Activated T-helper 2 cell treated with anti-CD3 and anti-CD28 coated beads, Interferon-gamma antibody, Interleukin-2, Interleukin-4, amounts not matched to agents 10 μg/mL and 5 μg/mL and 100 μg/mL, durations not matched to agents 14 hours and 24 hours and 36 hours (primary cell): ENCODE measurements at regions of chr5 and their contacts with region 1.

Region 1: DNA sequence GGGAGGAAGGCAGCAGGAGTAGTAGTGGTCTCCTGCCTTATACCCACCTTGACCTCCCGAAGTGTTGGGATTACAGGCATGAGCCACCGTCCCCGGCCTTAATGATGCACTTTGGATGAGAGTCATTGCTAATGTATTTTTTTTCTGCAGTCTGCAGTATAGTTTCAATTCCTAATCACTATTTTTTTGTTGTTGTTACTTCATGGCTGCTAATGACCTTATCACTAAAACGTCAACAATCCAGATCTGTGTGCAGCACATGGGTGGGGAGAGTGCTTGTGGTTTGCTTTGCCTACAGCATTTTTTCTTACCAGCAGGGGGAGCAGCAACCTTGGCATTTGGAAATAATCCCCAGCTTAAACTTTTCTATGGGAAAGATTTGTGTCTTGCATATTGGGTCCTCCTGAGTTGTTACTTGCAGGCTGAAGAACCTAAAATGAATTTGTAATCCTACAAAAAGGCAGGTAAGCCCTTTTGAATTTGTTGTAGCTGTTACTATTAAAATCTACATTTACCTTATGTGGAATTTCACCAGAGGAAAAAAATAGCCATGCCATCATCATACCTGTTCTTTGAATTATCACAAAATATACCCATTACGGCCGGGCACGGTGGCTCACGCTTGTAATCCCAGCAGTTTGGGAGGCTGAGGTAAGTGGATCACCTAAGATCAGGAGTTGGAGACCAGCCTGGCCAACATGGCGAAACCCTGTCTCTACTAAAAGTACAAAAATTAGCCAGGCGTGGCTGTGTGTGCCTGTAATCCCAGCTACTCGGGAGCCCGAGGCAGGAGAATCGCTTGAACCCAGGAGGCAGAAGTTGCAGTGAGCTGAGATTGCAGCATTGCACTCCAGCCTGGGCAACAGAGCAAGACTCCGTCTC is 6.3 kb upstream of the MED7 start:
- DNase-seq: peak; percentile 77
- H3K4me3 Mint-ChIP-seq: no peak overlapping the region
- H3K27ac Mint-ChIP-seq: peak overlapping the region; percentile 70
- H3K4me1 Mint-ChIP-seq: peaks cover 39% of the 10 kb centered on the region
- H3K27me3 Mint-ChIP-seq: no peaks in the 10 kb centered on the region

Region 2: GRCh38 chr5:157172403-157172802 is 23.4 kb after region 1 on chr5:
- intact Hi-C with region 1: loop called (anchors 1 kb)
- DNase-seq: peak; percentile 78
- H3K4me3 Mint-ChIP-seq: peak overlapping the region; percentile 73
- H3K27ac Mint-ChIP-seq: peak overlapping the region; percentile 98
- H3K4me1 Mint-ChIP-seq: peaks cover 72% of the 10 kb centered on the region
- H3K27me3 Mint-ChIP-seq: no peaks in the 10 kb centered on the region

Region 3: GRCh38 chr5:157198277-157198986 is 49.5 kb after region 1 on chr5:
- intact Hi-C with region 1: loop called (anchors 2 kb)
- DNase-seq: no peak
- H3K4me3 Mint-ChIP-seq: peak overlapping the region; percentile 55
- H3K27ac Mint-ChIP-seq: peak overlapping the region; percentile 84
- H3K4me1 Mint-ChIP-seq: peaks cover 85% of the 10 kb centered on the region
- H3K27me3 Mint-ChIP-seq: no peaks in the 10 kb centered on the region

Region 4: GRCh38 chr5:157253547-157253946 is 104.6 kb after region 1 on chr5:
- intact Hi-C with region 1: loop called (anchors 2 kb)
- DNase-seq: no peak
- H3K4me3 Mint-ChIP-seq: peak overlapping the region; percentile 58
- H3K27ac Mint-ChIP-seq: peak overlapping the region; percentile 95
- H3K4me1 Mint-ChIP-seq: peaks cover 87% of the 10 kb centered on the region
- H3K27me3 Mint-ChIP-seq: no peaks in the 10 kb centered on the region

Region 5: DNA sequence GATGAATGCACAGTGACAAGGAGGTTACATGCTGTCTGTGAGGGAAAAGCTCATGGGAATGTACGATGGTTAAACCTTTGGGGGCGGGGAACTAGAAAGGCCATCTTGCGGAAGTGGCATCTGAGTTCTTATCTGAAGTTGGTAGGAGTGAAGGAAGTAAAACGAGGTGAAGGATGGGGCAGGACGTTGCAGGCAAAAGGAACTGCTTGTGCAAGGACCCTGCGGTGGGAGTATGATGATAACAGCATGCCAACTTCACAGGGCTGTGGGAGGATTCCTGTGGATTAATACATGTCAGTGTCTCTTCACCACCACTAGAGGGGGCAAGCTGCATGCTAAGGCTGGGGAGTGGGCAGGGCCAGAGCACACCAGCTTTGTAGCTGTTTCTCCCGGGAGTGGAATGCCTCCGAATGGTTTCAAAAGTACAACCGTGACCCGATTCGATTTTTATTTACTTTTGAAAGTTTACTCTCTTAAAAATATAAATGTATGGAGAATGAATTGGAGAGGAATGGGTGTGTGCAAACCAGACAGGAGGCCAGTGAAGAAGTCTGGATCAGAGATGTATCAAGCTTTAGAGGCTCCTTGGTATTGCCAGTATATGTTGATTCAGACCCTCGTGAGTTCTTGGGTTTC is 179.4 kb after region 1 on chr5:
- intact Hi-C with region 1: loop called (anchors 5 kb)
- DNase-seq: peak; percentile 52
- H3K4me3 Mint-ChIP-seq: no peak overlapping the region
- H3K27ac Mint-ChIP-seq: peak overlapping the region; percentile 14
- H3K4me1 Mint-ChIP-seq: peaks cover 32% of the 10 kb centered on the region
- H3K27me3 Mint-ChIP-seq: no peaks in the 10 kb centered on the region

Region 6: DNA sequence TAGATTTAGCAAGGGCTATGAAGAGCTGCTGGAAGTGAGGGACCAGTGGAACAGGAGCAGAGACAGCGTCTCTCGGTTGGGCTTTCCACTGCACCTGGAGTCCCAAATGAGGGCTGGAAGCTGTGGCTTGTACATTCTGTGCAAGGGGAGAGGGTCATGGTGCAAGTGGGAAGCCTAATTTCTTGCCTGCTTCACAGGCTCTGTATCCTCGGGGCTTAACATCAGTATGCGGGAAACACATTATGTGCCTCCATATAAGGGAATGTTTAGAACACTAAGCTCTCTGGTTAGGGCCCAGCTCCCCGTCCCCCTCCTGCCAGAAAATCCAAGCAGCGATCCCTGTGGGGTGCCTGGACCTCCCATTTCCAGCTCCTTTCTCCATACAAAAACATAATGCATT is 222.0 kb after region 1 on chr5:
- intact Hi-C with region 1: no loop called
- DNase-seq: no peak
- H3K4me3 Mint-ChIP-seq: no peak overlapping the region
- H3K27ac Mint-ChIP-seq: no peak overlapping the region
- H3K4me1 Mint-ChIP-seq: peaks cover 5% of the 10 kb centered on the region
- H3K27me3 Mint-ChIP-seq: no peaks in the 10 kb centered on the region